Natural killer cell (primary cell): ENCODE measurements at regions of chr3 and their contacts with region 1.

Region 1: GRCh38 chr3:132535575-132536441 is 61.3 kb upstream of the ACKR4 start:
- DNase-seq: peak; percentile 17 to 73
- ATAC-seq: peak in 2 of 3 donors; percentile 58 to 64
- H3K4me3 ChIP-seq: no peak overlapping the region
- H3K4me3 Mint-ChIP-seq: no peak overlapping the region
- H3K27ac ChIP-seq: no peak overlapping the region
- H3K27ac Mint-ChIP-seq: no peak overlapping the region
- H3K4me1 ChIP-seq: no peaks in the 10 kb centered on the region
- H3K4me1 Mint-ChIP-seq: peaks cover 4 to 5% of the 10 kb centered on the region in 2 donors
- H3K27me3 ChIP-seq: no peaks in the 10 kb centered on the region
- H3K27me3 Mint-ChIP-seq: no peaks in the 10 kb centered on the region
- CTCF ChIP-seq: peak; percentile 80

Region 2: GRCh38 chr3:132641837-132642538 is 106.2 kb after region 1 on chr3:
- intact Hi-C with region 1: loop called (anchors 1 kb)
- DNase-seq: peak in 1 of 2 donors; percentile 58
- ATAC-seq: peak; percentile 53 to 65 (median 64)
- H3K4me3 ChIP-seq: no peak overlapping the region
- H3K4me3 Mint-ChIP-seq: no peak overlapping the region
- H3K27ac ChIP-seq: no peak overlapping the region
- H3K27ac Mint-ChIP-seq: no peak overlapping the region
- H3K4me1 ChIP-seq: no peaks in the 10 kb centered on the region
- H3K4me1 Mint-ChIP-seq: peaks cover 0 to 4% of the 10 kb centered on the region in 2 donors
- H3K27me3 ChIP-seq: no peaks in the 10 kb centered on the region
- H3K27me3 Mint-ChIP-seq: no peaks in the 10 kb centered on the region
- CTCF ChIP-seq: peak; percentile 87